PC-3 (cell line): ENCODE measurements at regions of chr6 and their contacts with region 1.

Region 1: GRCh38 chr6:142301651-142302370 is at the start of gene ADGRG6:
- DNase-seq: peak; percentile 66
- ATAC-seq: peak; percentile 52
- H3K4me3 ChIP-seq: peak within 1 kb of the TSS; percentile 88
- H3K27ac ChIP-seq: peak within 1 kb of the TSS; percentile 96
- H3K4me1 ChIP-seq: peaks cover 48% of the 10 kb centered on the region
- H3K27me3 ChIP-seq: no peaks in the 10 kb centered on the region
- CTCF ChIP-seq: peak; percentile 24; the same call in 1 of the 2 replicates
- total RNA-seq, gene ADGRG6: 50.4 and 73.2 TPM in 2 replicates

Region 2: GRCh38 chr6:142146828-142147662 is 154.8 kb before region 1 on chr6 and contains the starts of genes NMBR and VTA1:
- CTCF ChIA-PET with region 1: interaction called, 16 read pairs
- POLR2A ChIA-PET with region 1: no interaction called
- intact Hi-C with region 1: loop called (anchors 5 kb)
- DNase-seq: peak; percentile 98
- ATAC-seq: peak; percentile 99
- H3K4me3 ChIP-seq: peak within 1 kb of the TSS; percentile 93
- H3K27ac ChIP-seq: peak within 1 kb of the TSS; percentile 7; the same call in 1 of the 2 replicates
- H3K4me1 ChIP-seq: peaks cover 14% of the 10 kb centered on the region
- H3K27me3 ChIP-seq: no peaks in the 10 kb centered on the region
- CTCF ChIP-seq: peak; percentile 88
- total RNA-seq, gene NMBR: not detected in 2 replicates
- total RNA-seq, gene VTA1: 35.9 and 38.6 TPM in 2 replicates

Region 3: DNA sequence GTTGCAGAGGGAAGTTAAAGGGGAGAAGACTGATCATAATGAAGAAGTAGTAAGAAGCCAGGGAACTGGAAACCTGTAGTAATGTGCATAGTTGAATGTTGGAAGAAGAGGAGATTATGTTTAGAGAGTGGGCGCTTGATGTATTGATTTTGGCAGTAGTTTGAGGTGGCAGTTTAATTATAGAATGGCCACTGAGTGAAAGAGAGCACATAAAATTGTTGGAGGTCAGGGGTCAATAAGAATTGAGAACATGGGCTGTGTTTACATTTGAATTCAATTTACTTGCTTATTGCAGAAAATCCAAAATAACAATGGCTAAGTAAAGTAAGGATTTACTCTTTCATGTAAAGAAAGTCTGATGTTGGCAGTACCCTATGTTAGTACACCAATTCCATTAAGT is 139.0 kb before region 1 on chr6:
- CTCF ChIA-PET with region 1: no interaction called
- POLR2A ChIA-PET with region 1: no interaction called
- intact Hi-C with region 1: loop called (anchors 5 kb)
- DNase-seq: no peak
- ATAC-seq: no peak
- H3K4me3 ChIP-seq: no peak overlapping the region
- H3K27ac ChIP-seq: no peak overlapping the region
- H3K4me1 ChIP-seq: peaks cover 16% of the 10 kb centered on the region; the same call in 1 of the 2 replicates
- H3K27me3 ChIP-seq: no peaks in the 10 kb centered on the region
- CTCF ChIP-seq: no peak

Region 4: DNA sequence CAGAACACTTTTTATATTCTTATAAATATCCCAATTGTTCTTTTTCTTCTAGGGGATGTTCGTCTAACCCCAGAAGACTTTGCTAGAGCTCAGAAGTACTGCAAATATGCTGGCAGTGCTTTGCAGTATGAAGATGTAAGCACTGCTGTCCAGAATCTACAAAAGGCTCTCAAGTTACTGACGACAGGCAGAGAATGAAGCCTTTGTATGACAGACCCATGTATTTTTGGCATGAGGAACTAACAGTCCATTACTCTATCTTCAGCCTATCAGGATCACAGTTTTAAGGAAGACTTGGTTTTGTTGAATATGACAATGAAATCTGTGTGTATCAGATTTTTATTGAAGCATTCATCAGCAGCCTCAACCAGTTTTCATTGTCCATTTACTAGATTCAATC is 83.4 kb before region 1 on chr6:
- CTCF ChIA-PET with region 1: no interaction called
- POLR2A ChIA-PET with region 1: no interaction called
- intact Hi-C with region 1: loop called (anchors 10 kb)
- DNase-seq: no peak
- ATAC-seq: no peak
- H3K4me3 ChIP-seq: no peak overlapping the region
- H3K27ac ChIP-seq: no peak overlapping the region
- H3K4me1 ChIP-seq: no peaks in the 10 kb centered on the region
- H3K27me3 ChIP-seq: no peaks in the 10 kb centered on the region
- CTCF ChIP-seq: no peak

Region 5: GRCh38 chr6:142374965-142375733 is 73.3 kb after region 1 on chr6:
- CTCF ChIA-PET with region 1: interaction called, 3 read pairs
- POLR2A ChIA-PET with region 1: interaction called, 12 read pairs
- intact Hi-C with region 1: loop called (anchors 1 kb)
- DNase-seq: peak; percentile 95
- ATAC-seq: peak; percentile 33
- H3K4me3 ChIP-seq: 0 out of 2 replicates have a peak overlapping the region, but pooled peaks have one; percentile 23
- H3K27ac ChIP-seq: peak overlapping the region; percentile 100
- H3K4me1 ChIP-seq: peaks cover 73% of the 10 kb centered on the region
- H3K27me3 ChIP-seq: no peaks in the 10 kb centered on the region
- CTCF ChIP-seq: no peak

Region 6: DNA sequence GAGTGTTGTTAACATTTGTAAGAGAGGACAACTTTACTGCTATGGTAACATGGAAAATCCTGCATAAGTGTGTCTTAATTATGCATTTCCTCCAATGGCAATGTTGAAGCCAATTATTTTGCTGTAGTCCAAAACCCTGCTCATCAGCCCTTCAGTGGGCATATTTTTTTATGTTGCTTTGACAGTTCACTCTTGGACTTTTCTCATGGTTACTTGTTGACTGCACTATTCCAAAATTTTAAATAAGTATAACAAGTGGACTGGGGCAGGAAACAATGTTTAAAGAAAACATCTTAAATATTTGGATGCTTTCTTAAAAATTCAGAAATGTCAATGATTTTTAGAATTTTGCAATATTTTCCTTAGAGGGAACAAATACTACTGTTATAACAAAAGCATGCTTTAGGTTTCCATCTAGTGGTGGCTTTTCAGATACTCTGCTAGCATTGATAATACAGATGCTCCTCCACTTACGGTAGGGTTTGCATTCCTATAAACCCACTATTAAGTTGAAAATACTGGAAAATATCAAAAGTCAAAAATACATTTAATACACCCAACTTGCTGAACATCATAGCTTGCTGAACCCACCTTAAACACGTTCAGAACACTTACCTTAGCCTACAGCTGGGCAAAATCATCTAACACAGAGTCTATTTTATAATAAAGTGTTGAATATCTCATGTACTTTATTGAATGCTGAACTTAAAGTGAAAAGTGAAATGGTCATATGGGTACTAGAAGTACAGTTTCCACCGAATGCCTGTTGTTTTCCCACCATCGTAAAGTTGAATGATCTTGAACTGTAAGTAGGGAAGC is 86.4 kb after region 1 on chr6:
- CTCF ChIA-PET with region 1: interaction called, 4 read pairs
- POLR2A ChIA-PET with region 1: interaction called, 12 read pairs
- intact Hi-C with region 1: loop called (anchors 1 kb)
- DNase-seq: peak; percentile 72
- ATAC-seq: peak; percentile 67
- H3K4me3 ChIP-seq: no peak overlapping the region
- H3K27ac ChIP-seq: peak overlapping the region; percentile 92
- H3K4me1 ChIP-seq: peaks cover 37% of the 10 kb centered on the region
- H3K27me3 ChIP-seq: no peaks in the 10 kb centered on the region
- CTCF ChIP-seq: peak; percentile 77